ENCODE measurements at regions of chr1 and their contacts with region 1.

Region 1: DNA sequence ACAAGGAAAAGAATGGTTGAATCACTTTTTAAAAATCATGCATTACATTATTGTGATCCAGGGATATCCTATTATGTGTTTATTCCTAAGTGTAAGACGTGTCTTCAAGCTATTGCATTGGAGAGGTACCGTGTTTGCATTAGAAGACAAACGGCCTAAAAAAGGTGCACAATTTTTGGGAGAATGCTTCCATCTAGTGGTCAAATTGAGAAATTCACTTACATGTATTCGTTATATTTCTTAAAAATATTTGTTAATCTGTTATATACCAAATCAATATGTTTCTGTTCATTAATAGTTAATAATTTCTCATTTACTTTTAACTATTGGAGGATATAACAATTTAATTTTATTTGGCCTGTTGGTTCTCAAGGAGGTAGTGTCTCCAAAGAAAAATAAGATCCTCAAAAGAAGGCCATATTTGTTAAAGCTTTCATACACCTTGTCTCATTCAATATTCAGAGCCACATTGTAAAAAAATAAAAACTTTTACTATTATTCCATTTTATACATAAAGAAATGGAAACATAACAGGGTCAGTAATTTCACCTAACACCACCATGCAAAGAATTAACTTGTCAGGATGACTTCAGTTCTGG is 40.5 kb upstream of the KCTD3 start:
- DNase-seq: peak; percentile 29
- H3K4me3 ChIP-seq: no peak overlapping the region
- H3K27ac ChIP-seq: no peak overlapping the region
- H3K27me3 ChIP-seq: no peaks in the 10 kb centered on the region
- CTCF ChIP-seq: peak; percentile 58

Region 2: GRCh38 chr1:214632091-214632490 is 894.6 kb before region 1 on chr1:
- CTCF ChIA-PET with region 1: interaction called, 99 read pairs
- POLR2A ChIA-PET with region 1: no interaction called
- DNase-seq: no peak
- H3K4me3 ChIP-seq: no peak overlapping the region
- H3K27ac ChIP-seq: no peak overlapping the region
- H3K27me3 ChIP-seq: no peaks in the 10 kb centered on the region
- CTCF ChIP-seq: no peak

Region 3: GRCh38 chr1:214660862-214661261 is 865.8 kb before region 1 on chr1:
- CTCF ChIA-PET with region 1: interaction called, 82 read pairs
- POLR2A ChIA-PET with region 1: interaction called, 3 read pairs
- DNase-seq: peak; percentile 84
- H3K4me3 ChIP-seq: no peak overlapping the region
- H3K27ac ChIP-seq: no peak overlapping the region
- H3K27me3 ChIP-seq: no peaks in the 10 kb centered on the region
- CTCF ChIP-seq: peak; percentile 88

Region 4: GRCh38 chr1:215146341-215146826 is 380.3 kb before region 1 on chr1:
- CTCF ChIA-PET with region 1: interaction called, 33 read pairs
- POLR2A ChIA-PET with region 1: no interaction called
- DNase-seq: no peak
- H3K4me3 ChIP-seq: no peak overlapping the region
- H3K27ac ChIP-seq: no peak overlapping the region
- H3K27me3 ChIP-seq: no peaks in the 10 kb centered on the region
- CTCF ChIP-seq: peak; percentile 66

Region 5: GRCh38 chr1:215543191-215543606 is 16.5 kb after region 1 on chr1:
- CTCF ChIA-PET with region 1: interaction called, 12 read pairs
- POLR2A ChIA-PET with region 1: no interaction called
- DNase-seq: no peak
- H3K4me3 ChIP-seq: no peak overlapping the region
- H3K27ac ChIP-seq: no peak overlapping the region
- H3K27me3 ChIP-seq: no peaks in the 10 kb centered on the region
- CTCF ChIP-seq: no peak

Region 6: GRCh38 chr1:215761446-215761845 is 234.8 kb after region 1 on chr1:
- CTCF ChIA-PET with region 1: no interaction called
- POLR2A ChIA-PET with region 1: no interaction called
- DNase-seq: no peak
- H3K4me3 ChIP-seq: no peak overlapping the region
- H3K27ac ChIP-seq: no peak overlapping the region
- H3K27me3 ChIP-seq: no peaks in the 10 kb centered on the region
- CTCF ChIP-seq: no peak

Measured in AG04450 (cell line).